ENCODE measurements at regions of chr4 and their contacts with region 1.

Region 1: DNA sequence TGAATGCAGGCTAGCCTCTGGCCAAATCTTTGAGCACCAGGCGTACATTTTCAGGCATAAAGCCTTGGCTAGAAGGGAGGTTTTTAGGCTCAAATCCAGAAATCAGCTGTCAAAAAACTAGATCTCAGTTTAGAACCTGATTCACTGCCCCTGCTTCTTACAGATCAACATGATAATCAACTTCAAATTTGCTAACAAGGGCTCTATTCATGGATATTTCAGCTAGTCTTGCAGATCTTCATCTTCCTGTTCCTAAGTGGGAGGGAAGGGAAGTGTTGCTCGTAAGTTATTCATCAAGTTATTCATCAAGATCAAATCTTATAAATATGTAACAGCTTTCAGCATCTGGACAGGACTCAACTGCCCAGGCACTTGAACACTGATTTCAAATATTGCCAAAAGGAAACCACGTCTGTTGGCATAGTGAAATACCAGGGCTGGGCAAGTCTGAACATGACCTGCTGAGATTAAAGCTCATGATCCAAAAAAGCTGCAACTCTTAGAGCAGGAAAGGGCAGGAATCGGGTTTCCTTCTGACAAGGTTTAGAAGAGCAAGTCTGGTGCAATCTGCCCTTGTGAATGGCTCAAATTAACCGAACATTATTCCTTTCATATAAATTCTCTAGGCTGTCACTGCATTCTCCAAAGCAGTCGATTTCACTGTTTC is 200.3 kb downstream of the PDGFC start:
- DNase-seq: peak in 1 of 2 donors; percentile 65
- H3K4me3 ChIP-seq: peak overlapping the region; percentile 30 to 33
- H3K27ac ChIP-seq: peak overlapping the region; percentile 54 to 76
- H3K4me1 ChIP-seq: peaks cover 0 to 84% (median 21%) of the 10 kb centered on the region in 4 donors
- H3K27me3 ChIP-seq: no peaks in the 10 kb centered on the region
- CTCF ChIP-seq: no peak

Region 2: GRCh38 chr4:156830351-156830750 is 59.0 kb after region 1 on chr4:
- intact Hi-C with region 1: loop called (anchors 10 kb)
- DNase-seq: no peak
- H3K4me3 ChIP-seq: no peak overlapping the region
- H3K27ac ChIP-seq: peak overlapping the region in 1 of 2 donors; percentile 63
- H3K4me1 ChIP-seq: peaks cover 0 to 57% (median 9%) of the 10 kb centered on the region in 4 donors
- H3K27me3 ChIP-seq: no peaks in the 10 kb centered on the region
- CTCF ChIP-seq: no peak

Region 3: DNA sequence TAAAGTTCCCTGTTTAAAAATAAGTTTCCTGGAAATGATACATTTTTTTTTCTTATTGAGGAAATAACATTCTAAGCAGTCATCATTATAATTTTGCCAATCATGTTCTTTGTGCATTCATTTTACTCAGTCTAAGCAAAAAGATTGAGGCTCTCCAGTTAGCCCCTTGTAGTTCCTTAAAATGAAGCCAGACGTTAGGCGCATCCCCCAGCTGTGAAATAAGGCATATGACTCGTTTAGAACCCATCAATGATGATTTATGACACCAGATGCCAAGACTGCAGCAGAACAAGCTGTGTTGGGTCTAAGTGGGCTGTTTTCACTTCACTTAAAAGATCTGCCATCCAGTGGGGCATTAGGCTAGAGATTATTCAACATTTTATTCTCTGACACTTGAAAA is 183.3 kb after region 1 on chr4:
- intact Hi-C with region 1: loop called (anchors 10 kb)
- DNase-seq: peak in 1 of 2 donors; percentile 37
- H3K4me3 ChIP-seq: no peak overlapping the region
- H3K27ac ChIP-seq: peak overlapping the region in 1 of 2 donors; percentile 78
- H3K4me1 ChIP-seq: peaks cover 0 to 87% (median 31%) of the 10 kb centered on the region in 4 donors
- H3K27me3 ChIP-seq: no peaks in the 10 kb centered on the region
- CTCF ChIP-seq: no peak